ENCODE measurements at regions of chr19 and their contacts with region 1.

Region 1: GRCh38 chr19:16111160-16111908 is at the start of gene RAB8A:
- DNase-seq: peak; percentile 99
- ATAC-seq: peak; percentile 98
- total RNA-seq, gene RAB8A: 25.6 TPM

Region 2: DNA sequence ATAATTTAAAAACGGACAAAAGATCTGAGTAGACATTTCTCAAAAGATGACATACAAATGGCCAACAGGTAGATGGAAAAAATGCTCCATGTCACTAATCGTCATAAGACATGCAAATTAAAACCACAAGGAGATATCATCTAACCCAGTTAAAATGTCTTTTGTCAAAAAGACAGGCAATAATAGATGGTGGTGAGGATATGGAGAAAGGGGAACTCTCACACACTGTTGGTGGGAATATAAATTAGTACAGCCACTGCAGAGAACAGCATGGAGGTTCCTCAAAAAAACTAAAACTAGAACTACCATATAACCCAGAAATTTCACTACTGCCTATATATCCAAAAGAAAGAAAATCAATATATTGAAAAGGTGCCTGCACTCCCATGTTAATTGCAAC is 124.6 kb before region 1 on chr19:
- intact Hi-C with region 1: no loop called
- DNase-seq: no peak
- ATAC-seq: no peak

Region 3: GRCh38 chr19:16041299-16041990 is 69.9 kb before region 1 on chr19:
- intact Hi-C with region 1: loop called (anchors 1 kb)
- DNase-seq: peak; percentile 89
- ATAC-seq: peak; percentile 91

Region 4: DNA sequence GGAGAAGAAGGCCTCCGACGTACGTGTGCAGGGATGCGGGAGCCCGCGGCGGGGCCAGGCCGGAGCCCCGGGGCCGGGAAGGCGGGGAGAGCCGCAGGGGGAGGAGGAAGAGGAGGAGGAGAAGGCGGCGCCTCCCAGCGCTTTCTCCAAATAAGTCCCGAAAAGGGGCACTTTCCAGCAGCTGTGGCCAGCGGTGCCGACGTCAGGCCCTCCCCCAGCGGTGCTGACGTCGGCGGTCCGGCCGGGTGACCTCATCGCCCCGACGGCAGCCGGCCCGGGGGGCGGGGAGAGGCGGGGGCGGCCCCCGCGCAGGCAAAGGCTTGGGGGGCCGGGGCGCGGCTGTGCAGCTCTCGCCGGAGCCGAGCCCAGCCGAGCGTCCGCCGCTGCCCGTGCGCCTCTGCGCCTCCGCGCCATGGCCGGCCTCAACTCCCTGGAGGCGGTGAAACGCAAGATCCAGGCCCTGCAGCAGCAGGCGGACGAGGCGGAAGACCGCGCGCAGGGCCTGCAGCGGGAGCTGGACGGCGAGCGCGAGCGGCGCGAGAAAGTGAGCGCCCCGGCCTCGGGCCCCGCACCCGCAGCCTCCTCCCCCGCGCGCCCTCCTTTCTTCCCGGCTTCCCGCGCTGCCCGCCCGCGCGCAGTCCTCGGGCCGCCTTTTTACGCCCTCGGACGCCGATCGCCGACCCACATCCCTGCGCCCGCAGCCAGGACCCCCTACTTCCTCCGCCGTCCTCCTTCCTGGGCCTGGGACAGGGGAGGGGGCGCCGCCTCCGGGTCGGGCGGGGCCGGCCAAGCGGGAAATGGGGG is 35.0 kb before region 1 on chr19 and contains the start of gene TPM4:
- intact Hi-C with region 1: loop called (anchors 2 kb)
- DNase-seq: peak; percentile 96
- ATAC-seq: peak; percentile 90
- total RNA-seq, gene TPM4: 106 TPM